Caco-2 (cell line): ENCODE measurements at regions of chr5 and their contacts with region 1.

Region 1: GRCh38 chr5:59380350-59380951 is 513.1 kb downstream of the PDE4D start:
- DNase-seq: peak in 1 of 2 experiments; percentile 50
- H3K4me3 ChIP-seq: no peak overlapping the region
- H3K4me3 Mint-ChIP-seq: no peak overlapping the region
- H3K27ac Mint-ChIP-seq: no peak overlapping the region
- H3K4me1 ChIP-seq: peaks cover 7% of the 10 kb centered on the region; the same call in 1 of the 2 replicates
- H3K4me1 Mint-ChIP-seq: peaks cover under 1% of the 10 kb centered on the region
- H3K27me3 ChIP-seq: no peaks in the 10 kb centered on the region
- H3K27me3 Mint-ChIP-seq: no peaks in the 10 kb centered on the region
- CTCF ChIP-seq: peak; percentile 50 to 56

Region 2: GRCh38 chr5:59126708-59127573 is 253.5 kb before region 1 on chr5:
- CTCF ChIA-PET with region 1: no interaction called
- POLR2A ChIA-PET with region 1: no interaction called
- intact Hi-C with region 1: no loop called
- DNase-seq: peak; percentile 60 to 68
- H3K4me3 ChIP-seq: peak overlapping the region; percentile 30
- H3K4me3 Mint-ChIP-seq: no peak overlapping the region
- H3K27ac Mint-ChIP-seq: no peak overlapping the region
- H3K4me1 ChIP-seq: peaks cover 88% of the 10 kb centered on the region
- H3K4me1 Mint-ChIP-seq: peaks cover 7% of the 10 kb centered on the region
- H3K27me3 ChIP-seq: no peaks in the 10 kb centered on the region
- H3K27me3 Mint-ChIP-seq: no peaks in the 10 kb centered on the region
- CTCF ChIP-seq: no peak

Region 3: GRCh38 chr5:59335544-59335943 is 44.9 kb before region 1 on chr5:
- CTCF ChIA-PET with region 1: no interaction called
- POLR2A ChIA-PET with region 1: no interaction called
- intact Hi-C with region 1: loop called (anchors 1 kb)
- DNase-seq: peak in 1 of 2 experiments; percentile 14
- H3K4me3 ChIP-seq: no peak overlapping the region
- H3K4me3 Mint-ChIP-seq: no peak overlapping the region
- H3K27ac Mint-ChIP-seq: no peak overlapping the region
- H3K4me1 ChIP-seq: no peaks in the 10 kb centered on the region
- H3K4me1 Mint-ChIP-seq: no peaks in the 10 kb centered on the region
- H3K27me3 ChIP-seq: no peaks in the 10 kb centered on the region; the same call in 1 of the 2 replicates
- H3K27me3 Mint-ChIP-seq: no peaks in the 10 kb centered on the region
- CTCF ChIP-seq: peak in 1 of 2 experiments; percentile 34